SK-N-SH (cell line): ENCODE measurements at regions of chr1 and their contacts with region 1.

Region 1: DNA sequence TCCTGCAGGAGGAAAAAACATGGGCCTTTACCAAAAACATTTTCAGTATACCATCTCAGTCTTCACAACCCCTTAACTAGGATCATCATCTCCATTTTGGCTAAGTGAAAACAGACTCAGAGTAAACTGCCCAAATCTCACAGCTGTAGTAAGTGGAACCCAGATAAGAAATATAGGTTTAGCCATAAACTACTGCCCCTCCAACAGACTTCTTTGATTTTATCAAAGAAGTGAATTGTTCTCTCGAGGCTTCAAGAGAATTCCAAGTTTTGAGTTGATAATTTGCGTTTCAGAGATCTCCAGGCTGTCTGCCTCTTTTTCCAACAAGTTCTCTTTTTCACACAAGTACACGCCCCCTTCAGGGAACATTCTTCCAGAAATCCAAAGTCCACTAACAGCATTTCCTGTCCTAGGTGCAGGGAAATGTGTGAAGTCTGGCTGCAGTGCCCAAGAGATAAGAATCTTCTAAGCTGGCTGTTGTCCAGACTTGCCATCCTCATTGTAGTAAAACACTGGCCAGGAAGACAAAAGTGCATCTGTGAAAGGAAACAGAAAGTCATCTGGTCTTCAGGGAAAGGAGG is 30.8 kb downstream of the RNF19B start:
- DNase-seq: peak; percentile 79
- H3K4me3 ChIP-seq: no peak overlapping the region; a peak in 1 of 4 replicates
- H3K27ac ChIP-seq: peak overlapping the region; percentile 77 to 80
- H3K4me1 ChIP-seq: peaks cover 5 to 13% of the 10 kb centered on the region in 2 experiments
- H3K27me3 ChIP-seq: no peaks in the 10 kb centered on the region
- CTCF ChIP-seq: no peak; the same call in 1 of the 2 replicates
- EP300 ChIP-seq: peak; percentile 53 to 88; a peak in 3 of 4 replicates
- RAD21 ChIP-seq: peak; percentile 41

Region 2: DNA sequence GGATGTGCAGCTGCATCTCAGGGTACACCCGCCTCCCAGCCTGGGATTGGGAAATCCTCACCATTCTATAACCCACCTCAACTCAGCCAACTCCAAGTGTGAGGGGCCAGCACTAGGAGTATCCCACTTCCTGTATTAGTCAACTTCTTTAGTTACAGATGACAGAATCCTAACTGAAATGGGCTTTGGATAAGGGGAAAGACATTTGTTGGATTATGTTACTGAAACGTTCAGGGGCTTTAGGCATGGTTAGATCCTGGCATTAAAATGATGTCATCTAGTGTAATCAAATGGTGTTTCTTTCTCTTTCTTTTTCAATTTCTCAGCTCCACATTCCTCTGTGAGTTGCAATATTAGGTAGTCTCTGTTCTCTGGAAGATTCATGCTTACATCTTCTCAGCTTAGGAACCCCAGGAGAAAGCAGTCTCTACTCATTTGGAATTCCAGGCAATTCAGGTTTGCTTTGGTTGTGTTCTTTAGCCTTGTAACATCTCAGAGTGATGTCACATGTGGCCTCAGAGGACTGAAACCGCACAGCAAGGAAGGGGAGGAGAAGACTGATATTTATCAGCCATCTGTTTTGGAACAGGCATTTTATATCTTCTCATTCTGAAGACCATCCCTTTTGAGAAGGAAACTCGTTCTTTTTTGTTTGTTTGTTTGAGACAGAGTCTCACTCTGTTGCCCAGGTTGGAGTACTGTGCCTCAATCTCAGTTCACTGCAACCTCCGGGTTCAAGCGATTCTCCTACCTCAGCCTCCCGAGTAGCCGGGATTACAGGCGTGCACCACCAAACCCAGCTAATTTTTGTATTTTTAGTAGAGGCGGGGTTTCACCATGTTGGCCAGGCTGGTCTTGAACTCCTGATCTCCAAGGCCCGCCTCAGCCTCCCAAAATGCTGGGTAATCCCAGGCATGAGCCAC is 13.8 kb before region 1 on chr1:
- CTCF ChIA-PET with region 1: interaction called, 11 read pairs
- POLR2A ChIA-PET with region 1: no interaction called
- DNase-seq: no peak
- H3K4me3 ChIP-seq: no peak overlapping the region
- H3K27ac ChIP-seq: 0 out of 4 replicates have a peak overlapping the region, but pooled peaks of 1 of the 2 experiments have one; percentile 31
- H3K4me1 ChIP-seq: peaks cover 0 to 11% of the 10 kb centered on the region in 2 experiments; a peak in 1 of 4 replicates
- H3K27me3 ChIP-seq: no peaks in the 10 kb centered on the region
- CTCF ChIP-seq: no peak
- EP300 ChIP-seq: no peak
- RAD21 ChIP-seq: no peak

Region 3: GRCh38 chr1:32964461-32965250 is 30.8 kb after region 1 on chr1 and contains the start of gene RNF19B:
- CTCF ChIA-PET with region 1: interaction called, 9 read pairs
- POLR2A ChIA-PET with region 1: interaction called, 10 read pairs
- DNase-seq: peak; percentile 98
- H3K4me3 ChIP-seq: peak within 1 kb of the TSS; percentile 77 to 98
- H3K27ac ChIP-seq: peak within 1 kb of the TSS; percentile 63 to 77; a peak in 3 of 4 replicates
- H3K4me1 ChIP-seq: peaks cover 12 to 17% of the 10 kb centered on the region in 2 experiments; a peak in 3 of 4 replicates
- H3K27me3 ChIP-seq: no peaks in the 10 kb centered on the region
- CTCF ChIP-seq: no peak
- EP300 ChIP-seq: no peak; a peak in 1 of 4 replicates
- RAD21 ChIP-seq: no peak
- polyA plus RNA-seq, gene RNF19B: 20.1 and 22.6 TPM in 2 replicates

Region 4: DNA sequence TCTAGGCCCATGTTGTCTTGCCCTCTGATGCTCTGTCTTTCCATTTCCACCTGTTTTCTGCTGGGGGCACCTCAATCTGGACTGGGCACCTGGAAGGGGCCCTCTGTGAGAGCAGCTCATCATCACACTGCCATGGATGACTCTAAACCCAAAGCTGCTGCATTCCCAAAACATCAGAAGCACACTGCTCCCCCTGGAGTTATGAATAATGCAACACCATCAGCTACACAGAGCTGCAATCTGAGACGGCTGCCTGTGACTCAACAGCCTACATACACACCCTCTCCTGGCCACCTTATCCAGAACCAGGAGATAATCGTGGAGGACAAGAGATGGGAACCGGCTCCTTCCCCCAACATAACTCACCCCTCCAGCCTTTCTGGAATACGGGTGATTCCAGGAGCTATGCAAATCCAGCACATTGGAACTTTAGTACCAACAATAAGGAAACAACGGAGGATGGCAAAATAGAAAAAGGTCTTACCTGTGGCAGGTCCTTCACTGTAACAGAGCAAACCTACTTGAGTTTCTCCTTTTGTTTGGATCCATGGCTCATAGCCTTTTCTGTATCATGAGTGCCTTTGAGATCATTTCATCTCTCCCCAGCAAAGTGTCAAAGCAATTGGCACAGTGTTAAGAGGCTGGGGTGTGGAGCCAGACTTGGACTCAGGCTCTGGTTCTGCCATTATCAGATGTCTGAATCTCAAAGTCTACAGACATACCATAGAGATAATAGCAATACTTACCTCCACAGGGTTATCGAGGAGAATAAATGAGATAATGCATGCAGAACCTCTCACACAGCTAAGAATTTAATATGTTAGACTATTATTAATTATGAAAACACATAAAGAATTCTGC is 73.6 kb after region 1 on chr1:
- CTCF ChIA-PET with region 1: interaction called, 95 read pairs
- POLR2A ChIA-PET with region 1: interaction called, 3 read pairs
- DNase-seq: peak; percentile 52
- H3K4me3 ChIP-seq: no peak overlapping the region
- H3K27ac ChIP-seq: peak overlapping the region; percentile 60 to 75
- H3K4me1 ChIP-seq: peaks cover 36 to 61% of the 10 kb centered on the region in 2 experiments
- H3K27me3 ChIP-seq: no peaks in the 10 kb centered on the region
- CTCF ChIP-seq: peak; percentile 71
- EP300 ChIP-seq: peak in 1 of 2 experiments; percentile 6; a peak in 1 of 4 replicates
- RAD21 ChIP-seq: peak; percentile 73

Region 5: DNA sequence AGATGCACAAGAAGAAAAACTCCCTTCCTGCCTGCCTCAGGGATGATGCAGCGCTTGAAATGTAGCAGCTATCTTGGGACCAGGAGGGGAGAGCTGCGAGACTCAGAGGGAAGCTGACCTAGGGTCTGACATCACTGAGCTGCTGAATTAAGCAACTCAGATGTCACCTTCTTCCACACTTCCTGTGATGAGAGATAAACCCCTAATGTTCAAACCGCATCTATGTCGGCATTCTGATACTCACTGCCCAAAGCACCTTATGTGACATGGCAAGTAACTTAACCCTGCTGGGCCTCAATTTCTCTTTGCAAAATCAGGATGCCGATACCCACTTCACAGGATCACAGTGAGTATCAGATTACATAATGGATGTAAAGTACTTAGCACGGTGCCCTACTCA is 112.0 kb after region 1 on chr1:
- CTCF ChIA-PET with region 1: interaction called, 15 read pairs
- POLR2A ChIA-PET with region 1: no interaction called
- DNase-seq: no peak
- H3K4me3 ChIP-seq: no peak overlapping the region
- H3K27ac ChIP-seq: no peak overlapping the region
- H3K4me1 ChIP-seq: peaks cover 0 to 13% of the 10 kb centered on the region in 2 experiments; a peak in 1 of 4 replicates
- H3K27me3 ChIP-seq: no peaks in the 10 kb centered on the region
- CTCF ChIP-seq: no peak
- EP300 ChIP-seq: no peak
- RAD21 ChIP-seq: no peak

Region 6: DNA sequence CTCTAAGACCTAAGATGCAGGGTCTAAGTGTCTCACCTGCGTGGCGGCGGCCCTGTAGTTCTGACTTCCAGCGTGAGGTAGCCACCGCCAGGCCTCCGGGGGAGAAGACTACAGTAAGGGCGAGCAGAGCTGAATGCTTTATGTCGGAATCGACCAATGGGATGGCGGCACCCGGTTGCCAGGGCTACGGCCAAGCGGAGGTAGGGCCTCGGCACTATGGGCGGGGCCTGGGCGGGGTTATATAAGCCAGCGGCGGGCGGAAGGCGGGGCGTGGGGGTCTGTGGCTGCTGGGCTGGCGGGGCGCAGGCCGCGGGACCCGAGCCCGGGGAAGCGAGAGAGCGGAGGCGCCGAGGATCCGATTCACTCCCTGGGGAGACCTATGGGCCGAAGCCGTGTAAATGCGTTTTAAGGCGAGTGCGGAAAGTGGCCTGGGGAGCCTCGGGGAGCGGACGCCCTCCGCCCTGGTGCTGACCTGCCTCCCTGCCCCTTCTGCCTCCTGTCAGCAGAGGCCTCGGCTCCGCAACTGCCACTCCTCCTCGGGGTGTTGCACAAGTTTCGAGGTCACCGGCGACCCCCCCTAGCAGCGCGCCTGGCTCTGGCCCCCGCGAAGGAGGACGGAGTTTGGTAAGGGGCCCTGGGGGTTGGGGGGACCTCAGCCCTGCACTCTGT is 147.2 kb after region 1 on chr1 and contains the start of gene AZIN2:
- CTCF ChIA-PET with region 1: interaction called, 67 read pairs
- POLR2A ChIA-PET with region 1: no interaction called
- DNase-seq: peak; percentile 98
- H3K4me3 ChIP-seq: peak within 1 kb of the TSS; percentile 73 to 75
- H3K27ac ChIP-seq: peak within 1 kb of the TSS in 1 of 2 experiments; percentile 60; a peak in 2 of 4 replicates
- H3K4me1 ChIP-seq: peaks cover 9 to 13% of the 10 kb centered on the region in 2 experiments; a peak in 2 of 4 replicates
- H3K27me3 ChIP-seq: no peaks in the 10 kb centered on the region
- CTCF ChIP-seq: no peak
- EP300 ChIP-seq: no peak
- RAD21 ChIP-seq: no peak
- polyA plus RNA-seq, gene AZIN2: 17.8 and 20.6 TPM in 2 replicates